GM12878 (cell line): ENCODE measurements at regions of chr9 and their contacts with region 1.

Region 1: GRCh38 chr9:38183994-38184568 is 115.1 kb upstream of the SHB start:
- DNase-seq: no peak
- ATAC-seq: no peak
- H3K4me3 ChIP-seq: no peak overlapping the region
- H3K27ac ChIP-seq: no peak overlapping the region
- H3K4me1 ChIP-seq: peaks cover 14% of the 10 kb centered on the region
- H3K27me3 ChIP-seq: peaks cover 0 to 2% of the 10 kb centered on the region in 2 experiments; a peak in 1 of 4 replicates
- CTCF ChIP-seq: no peak
- EP300 ChIP-seq: no peak
- POLR2A ChIP-seq: no peak
- RAD21 ChIP-seq: no peak

Region 2: DNA sequence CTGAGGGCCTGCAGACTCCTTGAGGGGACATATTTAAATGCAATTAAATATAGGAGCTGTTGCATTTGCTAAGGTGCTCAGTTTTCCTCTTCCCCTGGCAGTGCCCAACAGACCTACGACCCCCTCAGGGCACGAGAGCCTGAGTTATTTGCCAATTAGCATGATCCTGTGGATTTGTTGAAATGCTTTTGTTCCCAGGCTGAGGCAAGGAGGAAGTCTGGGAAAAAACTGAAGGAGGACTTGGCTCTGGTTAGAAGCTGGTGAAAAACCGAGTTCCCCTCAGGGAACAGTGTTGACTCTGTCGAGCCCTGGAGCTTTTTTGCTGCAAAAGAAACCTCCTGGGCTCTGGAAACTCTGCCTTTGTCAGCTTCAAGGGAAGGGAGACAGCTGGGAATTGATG is 11.5 kb before region 1 on chr9:
- CTCF ChIA-PET with region 1: interaction called, 4 read pairs
- POLR2A ChIA-PET with region 1: interaction called, 3 read pairs
- RAD21 ChIA-PET with region 1: interaction called, 15 read pairs
- SMC1A ChIA-PET with region 1: interaction called, 17 read pairs
- in situ Hi-C with region 1: no loop called
- intact Hi-C with region 1: no loop called
- DNase-seq: no peak
- ATAC-seq: no peak
- H3K4me3 ChIP-seq: no peak overlapping the region
- H3K27ac ChIP-seq: no peak overlapping the region
- H3K4me1 ChIP-seq: peaks cover 1% of the 10 kb centered on the region; the same call in 1 of the 2 replicates
- H3K27me3 ChIP-seq: no peaks in the 10 kb centered on the region
- CTCF ChIP-seq: no peak
- EP300 ChIP-seq: no peak
- POLR2A ChIP-seq: no peak
- RAD21 ChIP-seq: no peak